ENCODE measurements at regions of chr2 and their contacts with region 1.

Region 1: GRCh38 chr2:54041135-54041534 is 70.3 kb upstream of the PSME4 start:
- DNase-seq: peak in 1 of 10 donors; percentile 5
- ATAC-seq: peak in 1 of 2 donors; percentile 49
- H3K4me3 Mint-ChIP-seq: no peak overlapping the region
- H3K27ac Mint-ChIP-seq: no peak overlapping the region
- H3K4me1 Mint-ChIP-seq: peaks cover 0 to 2% (median under 1%) of the 10 kb centered on the region in 4 donors
- H3K27me3 Mint-ChIP-seq: no peaks in the 10 kb centered on the region

Region 2: GRCh38 chr2:53949457-53949856 is 91.7 kb before region 1 on chr2:
- POLR2A ChIA-PET with region 1: no interaction called
- DNase-seq: no peak
- ATAC-seq: peak in 1 of 2 donors; percentile 36
- H3K4me3 Mint-ChIP-seq: no peak overlapping the region
- H3K27ac Mint-ChIP-seq: peak overlapping the region in 4 of 10 donors; percentile 2 to 71 (median 24)
- H3K4me1 Mint-ChIP-seq: peaks cover 20 to 64% (median 49%) of the 10 kb centered on the region in 4 donors
- H3K27me3 Mint-ChIP-seq: no peaks in the 10 kb centered on the region

Region 3: GRCh38 chr2:53994818-53995808 is 46.0 kb before region 1 on chr2:
- POLR2A ChIA-PET with region 1: interaction called, 12 read pairs
- DNase-seq: peak in 4 of 10 donors; percentile 41 to 89 (median 83)
- ATAC-seq: peak; percentile 94 to 96
- H3K4me3 Mint-ChIP-seq: peak overlapping the region; percentile 63 to 83 (median 71)
- H3K27ac Mint-ChIP-seq: peak overlapping the region; percentile 84 to 99 (median 95)
- H3K4me1 Mint-ChIP-seq: peaks cover 14 to 37% (median 34%) of the 10 kb centered on the region in 4 donors
- H3K27me3 Mint-ChIP-seq: no peaks in the 10 kb centered on the region

Measured in naive thymus-derived CD8-positive, alpha-beta T cell (primary cell).